Activated CD4-positive, alpha-beta T cell treated with anti-CD3 and anti-CD28 coated beads, Interleukin-2, amount 10 ng/mL, durations not matched to agents 24 days and 14 days (primary cell): ENCODE measurements at regions of chr6 and their contacts with region 1.

Region 1: DNA sequence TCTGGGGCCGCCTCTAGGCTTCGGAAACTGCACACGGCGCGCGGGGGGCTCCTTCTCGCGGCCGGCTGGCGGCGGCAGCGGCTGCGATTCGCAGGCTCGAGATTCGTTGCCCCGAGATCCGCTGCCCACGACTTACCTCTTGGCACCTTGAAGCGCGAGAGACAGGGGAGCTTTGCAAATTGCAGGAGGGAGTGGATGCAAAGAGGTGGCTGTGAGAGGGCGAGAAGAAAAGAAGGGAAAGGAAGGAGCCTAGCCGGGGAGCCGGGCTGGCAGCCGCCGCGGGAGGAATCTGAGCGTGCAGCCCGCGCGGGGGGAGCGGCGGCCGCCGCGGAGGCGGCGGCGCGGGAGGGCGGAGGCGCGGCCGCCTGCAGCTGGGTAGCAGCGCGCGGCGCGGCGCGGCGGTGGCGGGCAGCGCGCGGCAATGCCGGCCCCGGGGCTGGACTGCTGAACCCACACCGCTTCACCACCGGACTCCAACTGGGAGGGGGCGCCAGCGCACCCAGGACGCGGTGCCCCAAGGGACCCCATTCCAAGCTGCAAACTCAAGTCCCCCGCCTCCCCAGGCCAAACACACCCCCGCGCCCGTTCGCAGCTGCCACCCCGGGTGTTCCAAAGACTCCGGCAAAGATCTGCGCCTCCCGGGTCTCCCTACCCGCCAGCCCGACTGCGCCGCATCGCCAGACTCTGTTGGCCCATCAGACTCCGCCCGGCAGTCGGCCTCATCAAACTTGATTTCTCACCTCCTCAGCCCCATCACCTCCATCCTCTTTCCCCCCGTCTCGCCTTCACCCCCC is 44.2 kb upstream of the SUPT3H start:
- DNase-seq: peak; percentile 84
- H3K4me3 Mint-ChIP-seq: peak overlapping the region; percentile 94
- H3K27ac Mint-ChIP-seq: peak overlapping the region; percentile 98
- H3K4me1 Mint-ChIP-seq: peaks cover 44% of the 10 kb centered on the region
- H3K27me3 Mint-ChIP-seq: peaks cover 18% of the 10 kb centered on the region

Region 2: DNA sequence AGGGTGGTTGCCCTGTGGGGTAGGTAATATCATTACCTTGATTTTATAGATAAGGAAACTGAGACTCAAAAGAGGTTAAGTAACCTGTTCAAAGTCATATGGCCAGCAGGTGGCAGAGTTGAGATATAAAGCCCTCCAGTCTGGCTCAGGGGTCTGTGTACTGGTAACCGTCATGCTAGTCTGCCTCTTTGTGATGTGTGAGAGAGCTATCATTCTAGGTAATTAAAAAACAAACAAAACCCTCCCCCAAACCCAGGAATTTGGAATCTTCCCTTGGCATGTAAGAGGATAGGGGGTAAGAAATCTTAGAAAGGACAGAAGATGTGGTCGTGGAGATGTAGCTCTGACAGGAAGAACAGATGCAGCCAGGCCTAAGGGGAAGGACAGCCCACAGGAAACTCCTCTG is 828.4 kb before region 1 on chr6:
- intact Hi-C with region 1: loop called (anchors 2 kb)
- DNase-seq: peak; percentile 85
- H3K4me3 Mint-ChIP-seq: no peak overlapping the region
- H3K27ac Mint-ChIP-seq: no peak overlapping the region
- H3K4me1 Mint-ChIP-seq: no peaks in the 10 kb centered on the region
- H3K27me3 Mint-ChIP-seq: peaks cover 13% of the 10 kb centered on the region

Region 3: GRCh38 chr6:44704240-44705150 is 717.4 kb before region 1 on chr6:
- intact Hi-C with region 1: loop called (anchors 2 kb)
- DNase-seq: peak; percentile 77
- H3K4me3 Mint-ChIP-seq: peak overlapping the region; percentile 1
- H3K27ac Mint-ChIP-seq: peak overlapping the region; percentile 85
- H3K4me1 Mint-ChIP-seq: peaks cover 26% of the 10 kb centered on the region
- H3K27me3 Mint-ChIP-seq: no peaks in the 10 kb centered on the region

Region 4: DNA sequence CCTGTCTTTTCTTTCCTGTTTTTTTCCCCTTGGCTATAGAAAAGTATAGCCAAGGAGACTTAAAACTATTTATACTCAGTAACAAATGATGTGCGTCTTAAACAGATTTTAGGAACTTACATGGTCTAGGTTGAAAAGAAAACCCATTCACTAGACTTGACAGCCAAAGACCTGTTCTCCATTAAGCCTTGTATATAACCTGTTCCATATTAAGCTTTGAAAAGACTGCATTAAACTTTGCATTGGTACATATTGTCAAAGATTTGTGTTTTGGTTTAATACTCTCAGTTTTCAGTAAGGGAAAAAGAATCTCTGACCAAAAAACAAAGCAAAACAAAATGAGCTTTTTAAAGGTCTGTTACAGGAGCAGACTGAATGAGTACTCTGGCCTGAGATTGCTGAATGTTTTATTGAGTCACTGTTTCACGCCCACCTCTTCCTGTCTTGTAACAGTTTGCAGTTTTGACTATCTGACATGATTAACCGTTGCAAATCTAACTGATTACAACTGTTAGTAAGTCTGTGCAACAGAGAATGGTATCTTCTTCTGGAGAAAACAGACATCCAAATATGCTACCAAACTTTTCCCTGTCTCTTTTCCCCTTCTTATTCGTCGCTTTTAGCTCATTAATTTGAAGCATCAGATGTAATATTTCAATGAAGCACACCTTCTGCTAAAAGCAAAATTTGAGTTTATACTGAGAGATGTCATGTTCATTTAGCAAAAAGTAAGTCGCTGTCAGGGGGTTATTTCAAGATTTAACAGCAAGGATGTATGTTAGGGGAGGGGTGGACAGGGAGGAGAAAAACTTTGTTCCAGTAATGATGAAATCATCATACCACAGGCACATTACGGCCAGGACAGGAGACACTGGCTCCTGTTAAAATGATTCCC is 14.9 kb after region 1 on chr6:
- intact Hi-C with region 1: loop called (anchors 1 kb)
- DNase-seq: peak; percentile 75
- H3K4me3 Mint-ChIP-seq: peak overlapping the region; percentile 79
- H3K27ac Mint-ChIP-seq: peak overlapping the region; percentile 91
- H3K4me1 Mint-ChIP-seq: peaks cover 60% of the 10 kb centered on the region
- H3K27me3 Mint-ChIP-seq: no peaks in the 10 kb centered on the region

Region 5: GRCh38 chr6:45697605-45698004 is 275.7 kb after region 1 on chr6:
- intact Hi-C with region 1: no loop called
- DNase-seq: no peak
- H3K4me3 Mint-ChIP-seq: no peak overlapping the region
- H3K27ac Mint-ChIP-seq: no peak overlapping the region
- H3K4me1 Mint-ChIP-seq: peaks cover 5% of the 10 kb centered on the region
- H3K27me3 Mint-ChIP-seq: peaks cover 2% of the 10 kb centered on the region

Region 6: GRCh38 chr6:45737331-45738056 is 315.6 kb after region 1 on chr6:
- intact Hi-C with region 1: loop called (anchors 1 kb)
- DNase-seq: peak; percentile 82
- H3K4me3 Mint-ChIP-seq: peak overlapping the region; percentile 68
- H3K27ac Mint-ChIP-seq: peak overlapping the region; percentile 85
- H3K4me1 Mint-ChIP-seq: peaks cover 53% of the 10 kb centered on the region
- H3K27me3 Mint-ChIP-seq: peaks cover 3% of the 10 kb centered on the region

Region 7: GRCh38 chr6:45830441-45831139 is 408.7 kb after region 1 on chr6:
- intact Hi-C with region 1: loop called (anchors 5 kb)
- DNase-seq: peak; percentile 82
- H3K4me3 Mint-ChIP-seq: peak overlapping the region; percentile 76
- H3K27ac Mint-ChIP-seq: peak overlapping the region; percentile 91
- H3K4me1 Mint-ChIP-seq: peaks cover 38% of the 10 kb centered on the region
- H3K27me3 Mint-ChIP-seq: no peaks in the 10 kb centered on the region